ENCODE measurements at regions of chr11 and their contacts with region 1.

Region 1: GRCh38 chr11:19903620-19904069 is 191.0 kb downstream of the NAV2 start:
- DNase-seq: peak; percentile 80
- H3K4me3 Mint-ChIP-seq: no peak overlapping the region
- H3K27ac Mint-ChIP-seq: no peak overlapping the region
- H3K4me1 Mint-ChIP-seq: no peaks in the 10 kb centered on the region
- H3K27me3 Mint-ChIP-seq: no peaks in the 10 kb centered on the region
- CTCF ChIP-seq: peak; percentile 85

Region 2: GRCh38 chr11:19546325-19546724 is 357.3 kb before region 1 on chr11:
- CTCF ChIA-PET with region 1: interaction called, 11 read pairs
- POLR2A ChIA-PET with region 1: no interaction called
- intact Hi-C with region 1: no loop called
- DNase-seq: no peak
- H3K4me3 Mint-ChIP-seq: no peak overlapping the region
- H3K27ac Mint-ChIP-seq: no peak overlapping the region
- H3K4me1 Mint-ChIP-seq: no peaks in the 10 kb centered on the region
- H3K27me3 Mint-ChIP-seq: peaks cover 98% of the 10 kb centered on the region
- CTCF ChIP-seq: no peak

Region 3: DNA sequence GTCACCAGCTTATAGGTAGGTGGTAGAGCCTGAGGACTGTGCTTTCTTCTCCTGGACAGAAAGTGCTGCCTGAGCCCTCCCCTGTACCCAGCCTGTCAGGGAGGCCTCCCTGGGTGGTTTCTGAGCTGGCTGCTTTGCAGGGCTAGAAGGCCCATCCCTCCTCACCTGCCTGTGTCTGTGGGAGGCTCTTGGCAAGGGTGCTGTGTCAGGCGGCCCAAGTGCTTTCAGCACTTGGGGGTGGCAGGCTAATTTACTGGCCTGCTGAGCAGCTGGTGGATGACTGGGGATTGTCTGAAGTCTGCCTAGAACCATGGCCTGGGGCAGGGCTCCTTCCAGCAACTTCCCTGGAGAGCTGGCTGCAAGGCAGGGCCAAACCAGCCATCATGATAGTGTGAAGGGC is 330.0 kb before region 1 on chr11:
- CTCF ChIA-PET with region 1: interaction called, 13 read pairs
- POLR2A ChIA-PET with region 1: no interaction called
- intact Hi-C with region 1: no loop called
- DNase-seq: no peak
- H3K4me3 Mint-ChIP-seq: no peak overlapping the region
- H3K27ac Mint-ChIP-seq: no peak overlapping the region
- H3K4me1 Mint-ChIP-seq: no peaks in the 10 kb centered on the region
- H3K27me3 Mint-ChIP-seq: no peaks in the 10 kb centered on the region
- CTCF ChIP-seq: no peak

Region 4: GRCh38 chr11:19698493-19699292 is 205.0 kb before region 1 on chr11:
- CTCF ChIA-PET with region 1: no interaction called
- POLR2A ChIA-PET with region 1: no interaction called
- intact Hi-C with region 1: no loop called
- DNase-seq: peak; percentile 98
- H3K4me3 Mint-ChIP-seq: no peak overlapping the region
- H3K27ac Mint-ChIP-seq: peak overlapping the region; percentile 21
- H3K4me1 Mint-ChIP-seq: peaks cover 27% of the 10 kb centered on the region
- H3K27me3 Mint-ChIP-seq: no peaks in the 10 kb centered on the region
- CTCF ChIP-seq: no peak

Region 5: GRCh38 chr11:19753451-19754106 is 150.1 kb before region 1 on chr11:
- CTCF ChIA-PET with region 1: interaction called, 26 read pairs
- POLR2A ChIA-PET with region 1: no interaction called
- intact Hi-C with region 1: no loop called
- DNase-seq: no peak
- H3K4me3 Mint-ChIP-seq: no peak overlapping the region
- H3K27ac Mint-ChIP-seq: no peak overlapping the region
- H3K4me1 Mint-ChIP-seq: no peaks in the 10 kb centered on the region
- H3K27me3 Mint-ChIP-seq: no peaks in the 10 kb centered on the region
- CTCF ChIP-seq: no peak

Region 6: DNA sequence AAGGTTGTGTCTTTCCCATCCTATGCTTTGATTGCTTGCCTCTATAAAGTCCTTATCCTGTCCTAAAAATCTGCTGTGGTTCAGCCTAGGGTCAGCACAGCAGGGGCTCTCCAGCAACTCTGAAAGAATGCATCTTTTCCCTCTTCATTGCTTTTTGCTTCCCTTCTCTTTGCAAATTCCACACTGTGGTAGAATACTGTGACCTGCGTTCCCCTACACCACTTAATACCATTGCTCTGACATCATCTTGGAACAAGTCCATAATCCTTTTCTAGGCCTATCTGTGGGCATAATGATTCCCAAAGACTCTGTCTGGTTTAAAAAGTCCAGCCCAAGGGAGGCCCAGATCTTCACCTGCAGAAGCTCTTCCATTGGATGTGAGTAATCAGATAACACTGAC is 13.3 kb before region 1 on chr11:
- CTCF ChIA-PET with region 1: interaction called, 15 read pairs
- POLR2A ChIA-PET with region 1: interaction called, 4 read pairs
- intact Hi-C with region 1: no loop called
- DNase-seq: peak; percentile 32
- H3K4me3 Mint-ChIP-seq: no peak overlapping the region
- H3K27ac Mint-ChIP-seq: no peak overlapping the region
- H3K4me1 Mint-ChIP-seq: peaks cover 26% of the 10 kb centered on the region
- H3K27me3 Mint-ChIP-seq: no peaks in the 10 kb centered on the region
- CTCF ChIP-seq: no peak

Region 7: DNA sequence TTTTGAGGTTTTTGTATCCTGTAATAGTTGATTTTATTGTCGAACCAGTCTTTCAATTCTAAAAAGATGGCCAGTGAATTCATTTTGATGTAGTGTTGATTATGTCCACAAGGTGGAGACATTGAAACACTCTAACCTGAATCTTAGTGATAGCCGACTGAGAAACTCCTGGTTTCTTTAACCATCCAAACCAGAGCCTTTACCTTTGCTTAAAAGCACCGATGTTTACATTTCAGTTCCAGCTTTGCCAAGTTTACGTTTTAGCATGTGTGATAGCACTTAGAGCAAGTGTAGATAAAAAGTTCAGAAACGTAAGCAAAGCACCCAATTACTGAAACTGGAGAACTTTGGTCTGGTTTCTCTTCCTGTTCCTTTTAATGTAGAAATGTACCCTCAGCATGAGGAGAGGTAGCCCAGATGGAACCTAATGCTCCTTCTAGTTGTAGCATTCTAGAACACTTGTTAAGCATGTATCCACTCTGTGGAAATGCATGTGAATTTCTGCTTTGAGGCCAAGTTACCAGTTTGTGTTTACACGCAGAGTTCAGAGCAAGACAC is 48.0 kb after region 1 on chr11:
- CTCF ChIA-PET with region 1: interaction called, 19 read pairs
- POLR2A ChIA-PET with region 1: no interaction called
- intact Hi-C with region 1: loop called (anchors 5 kb)
- DNase-seq: peak; percentile 76
- H3K4me3 Mint-ChIP-seq: peak overlapping the region; percentile 28
- H3K27ac Mint-ChIP-seq: peak overlapping the region; percentile 64
- H3K4me1 Mint-ChIP-seq: peaks cover 41% of the 10 kb centered on the region
- H3K27me3 Mint-ChIP-seq: no peaks in the 10 kb centered on the region
- CTCF ChIP-seq: peak; percentile 60

Region 8: GRCh38 chr11:20355221-20356219 is 451.9 kb after region 1 on chr11:
- CTCF ChIA-PET with region 1: interaction called, 8 read pairs
- POLR2A ChIA-PET with region 1: interaction called, 3 read pairs
- intact Hi-C with region 1: loop called (anchors 5 kb)
- DNase-seq: peak; percentile 65
- H3K4me3 Mint-ChIP-seq: no peak overlapping the region
- H3K27ac Mint-ChIP-seq: no peak overlapping the region
- H3K4me1 Mint-ChIP-seq: peaks cover 17% of the 10 kb centered on the region
- H3K27me3 Mint-ChIP-seq: no peaks in the 10 kb centered on the region
- CTCF ChIP-seq: peak; percentile 69

Measured in MCF 10A (cell line).